Activated CD4-positive, alpha-beta T cell treated with anti-CD3 and anti-CD28 coated beads, Interleukin-2, amount 10 ng/mL, durations not matched to agents 24 days and 14 days (primary cell): ENCODE measurements at regions of chr14 and their contacts with region 1.

Region 1: GRCh38 chr14:55333711-55334485 is 62.7 kb downstream of the FBXO34 start:
- DNase-seq: no peak
- H3K4me3 Mint-ChIP-seq: peak overlapping the region; percentile 77
- H3K27ac Mint-ChIP-seq: peak overlapping the region; percentile 87
- H3K4me1 Mint-ChIP-seq: peaks cover 68% of the 10 kb centered on the region
- H3K27me3 Mint-ChIP-seq: no peaks in the 10 kb centered on the region

Region 2: DNA sequence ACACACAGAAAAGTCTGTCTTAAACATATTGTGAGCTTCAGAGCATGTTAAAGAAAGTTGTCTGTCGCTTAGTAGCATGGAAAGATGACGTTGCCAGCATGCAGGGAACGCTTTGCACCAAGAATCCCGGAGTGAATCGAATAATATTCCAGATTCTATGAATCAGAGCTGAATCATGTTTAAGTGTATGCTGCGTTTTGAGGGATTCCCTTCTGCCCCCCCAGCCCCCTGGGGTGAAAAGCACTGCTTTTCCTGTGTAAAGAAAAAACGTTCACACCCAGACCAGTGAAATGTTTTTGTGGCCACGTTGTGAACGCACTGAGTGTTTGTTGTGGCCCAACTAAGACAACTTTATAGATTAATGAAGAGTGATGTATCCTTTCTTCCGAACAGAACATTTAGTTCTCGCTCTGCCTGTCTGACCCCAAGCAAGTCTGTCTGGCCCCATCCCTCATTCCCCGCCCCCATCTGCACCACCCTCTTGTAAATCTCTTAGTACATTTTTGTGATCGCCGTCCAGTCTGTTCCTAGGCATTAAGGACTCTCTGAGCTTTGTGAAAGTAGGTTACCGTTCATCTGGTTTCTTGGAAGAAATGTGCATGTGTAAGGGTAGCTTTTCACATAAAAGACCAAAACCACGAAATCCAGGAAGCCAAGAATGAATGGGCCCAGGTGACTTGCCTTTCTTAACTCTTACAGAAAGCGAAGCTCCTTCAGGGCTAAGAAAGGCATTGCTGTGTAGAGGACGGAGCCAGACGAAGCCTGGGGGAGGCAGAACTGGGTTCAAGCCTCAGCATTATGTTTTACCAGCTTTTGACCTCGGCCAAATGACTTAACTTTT is 664.0 kb before region 1 on chr14:
- intact Hi-C with region 1: no loop called
- DNase-seq: peak; percentile 71
- H3K4me3 Mint-ChIP-seq: peak overlapping the region; percentile 6
- H3K27ac Mint-ChIP-seq: peak overlapping the region; percentile 8
- H3K4me1 Mint-ChIP-seq: peaks cover 29% of the 10 kb centered on the region
- H3K27me3 Mint-ChIP-seq: peaks cover 22% of the 10 kb centered on the region

Region 3: DNA sequence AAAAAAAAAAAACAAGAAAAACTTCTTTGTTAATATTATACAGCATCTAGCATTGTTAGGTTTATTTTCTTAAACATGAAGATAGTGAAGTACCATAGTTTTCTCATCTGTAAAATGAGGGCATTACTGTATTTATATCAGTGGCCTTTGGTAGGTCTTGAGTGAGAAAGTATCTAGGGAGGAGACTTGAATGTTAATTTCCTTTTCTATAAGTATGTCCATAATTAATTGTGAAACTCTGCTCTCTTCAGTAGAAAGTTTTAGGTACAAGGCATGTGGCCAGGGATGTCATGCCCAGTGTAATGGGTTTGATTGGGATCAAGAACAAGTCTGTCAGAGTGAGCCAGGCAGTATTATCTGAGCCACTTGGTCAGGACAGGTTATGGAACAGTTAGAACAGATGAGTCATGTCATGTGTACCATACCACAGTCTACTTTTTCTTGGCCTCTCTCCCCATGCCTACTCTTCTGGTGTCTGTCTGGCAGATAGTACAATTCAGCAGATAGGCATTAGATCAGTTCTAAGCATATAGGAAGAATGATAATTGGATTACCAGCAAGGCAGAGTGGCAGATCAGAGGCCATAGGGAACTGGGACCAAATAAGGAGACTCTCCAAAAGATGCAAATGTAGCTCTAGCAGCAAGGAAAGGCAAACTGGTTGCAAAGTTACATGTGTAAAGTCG is 32.3 kb before region 1 on chr14:
- intact Hi-C with region 1: loop called (anchors 2 kb)
- DNase-seq: no peak
- H3K4me3 Mint-ChIP-seq: no peak overlapping the region
- H3K27ac Mint-ChIP-seq: peak overlapping the region; percentile 70
- H3K4me1 Mint-ChIP-seq: peaks cover 52% of the 10 kb centered on the region
- H3K27me3 Mint-ChIP-seq: no peaks in the 10 kb centered on the region